ENCODE measurements at regions of chr1 and their contacts with region 1.

Region 1: DNA sequence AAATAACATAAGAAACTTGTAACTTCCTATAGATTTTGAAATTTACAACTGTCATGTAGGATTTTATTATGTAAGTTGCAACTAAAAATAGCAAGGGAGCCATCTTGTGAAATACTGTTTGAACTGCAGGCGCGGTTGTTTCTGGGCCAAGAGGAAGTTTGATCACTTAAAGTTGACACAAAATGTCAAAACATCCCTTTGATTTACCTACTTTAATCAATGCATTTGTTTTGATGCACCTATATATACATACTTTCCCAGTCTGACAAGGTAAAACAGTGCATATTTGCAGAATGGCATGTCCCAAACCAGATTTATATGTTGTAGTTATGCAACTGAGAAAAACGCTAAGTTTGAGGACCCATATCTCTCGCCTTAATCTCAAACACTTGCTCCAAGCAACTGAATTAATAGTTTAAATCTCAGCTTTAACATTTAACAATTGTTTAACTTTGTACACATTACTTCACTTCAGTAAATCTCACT is 63.8 kb downstream of the KCNK2 start:
- DNase-seq: peak; percentile 42
- H3K4me3 ChIP-seq: no peak overlapping the region
- H3K27ac ChIP-seq: no peak overlapping the region
- H3K4me1 ChIP-seq: no peaks in the 10 kb centered on the region
- H3K27me3 ChIP-seq: no peaks in the 10 kb centered on the region
- CTCF ChIP-seq: peak; percentile 67

Region 2: GRCh38 chr1:214660862-214661261 is 485.5 kb before region 1 on chr1:
- CTCF ChIA-PET with region 1: interaction called, 5 read pairs
- POLR2A ChIA-PET with region 1: no interaction called
- intact Hi-C with region 1: loop called (anchors 1 kb)
- DNase-seq: peak; percentile 83
- H3K4me3 ChIP-seq: no peak overlapping the region
- H3K27ac ChIP-seq: no peak overlapping the region
- H3K4me1 ChIP-seq: peaks cover 8% of the 10 kb centered on the region
- H3K27me3 ChIP-seq: no peaks in the 10 kb centered on the region
- CTCF ChIP-seq: peak; percentile 73

Region 3: GRCh38 chr1:214808845-214809460 is 337.4 kb before region 1 on chr1:
- CTCF ChIA-PET with region 1: no interaction called
- POLR2A ChIA-PET with region 1: no interaction called
- intact Hi-C with region 1: loop called (anchors 1 kb)
- DNase-seq: peak; percentile 33
- H3K4me3 ChIP-seq: no peak overlapping the region
- H3K27ac ChIP-seq: no peak overlapping the region
- H3K4me1 ChIP-seq: no peaks in the 10 kb centered on the region
- H3K27me3 ChIP-seq: peaks cover 25% of the 10 kb centered on the region
- CTCF ChIP-seq: peak; percentile 42